Head of caudate nucleus (tissue), 42 donors: ENCODE measurements at regions of chr11 and their contacts with region 1.

Region 1: DNA sequence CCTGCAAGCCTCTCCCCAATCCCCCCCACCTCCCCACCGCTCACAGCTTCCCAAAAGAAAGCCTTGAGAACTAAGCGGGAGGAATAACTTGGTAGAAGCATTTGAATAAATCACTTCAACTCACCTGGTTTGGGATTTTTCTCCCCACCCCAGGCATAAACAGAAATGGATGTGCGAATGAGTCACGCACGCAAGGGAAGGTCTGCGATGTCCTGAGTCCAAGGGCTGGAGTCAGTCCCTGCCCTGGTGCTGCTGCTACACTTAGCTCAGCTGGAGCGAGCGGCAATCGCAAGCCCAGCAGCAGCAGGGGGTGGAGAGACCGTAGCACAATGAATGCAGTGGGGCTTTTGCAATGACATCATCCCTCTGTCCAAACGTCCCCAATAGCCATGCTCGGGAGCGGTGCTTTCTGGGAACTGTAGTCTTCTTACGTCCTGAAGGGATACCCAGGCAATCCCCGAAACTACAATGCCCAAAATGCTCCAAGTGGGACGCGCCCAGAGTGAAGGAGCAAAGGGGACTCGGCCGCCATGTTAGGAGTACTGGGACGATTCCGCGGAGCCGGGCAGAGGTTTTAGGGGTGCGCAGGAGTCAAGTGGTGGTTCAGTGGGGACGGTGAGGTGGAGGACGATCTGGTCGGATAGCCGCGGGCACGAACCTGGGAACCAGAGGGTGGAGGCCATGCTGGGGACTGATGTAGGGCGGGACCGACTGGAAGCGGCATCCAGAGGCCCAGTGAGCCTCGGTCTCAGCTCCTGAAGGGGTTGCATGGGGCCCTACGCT is at the start of gene RAB30:
- DNase-seq: peak; percentile 93 to 100 (median 99)

Region 2: DNA sequence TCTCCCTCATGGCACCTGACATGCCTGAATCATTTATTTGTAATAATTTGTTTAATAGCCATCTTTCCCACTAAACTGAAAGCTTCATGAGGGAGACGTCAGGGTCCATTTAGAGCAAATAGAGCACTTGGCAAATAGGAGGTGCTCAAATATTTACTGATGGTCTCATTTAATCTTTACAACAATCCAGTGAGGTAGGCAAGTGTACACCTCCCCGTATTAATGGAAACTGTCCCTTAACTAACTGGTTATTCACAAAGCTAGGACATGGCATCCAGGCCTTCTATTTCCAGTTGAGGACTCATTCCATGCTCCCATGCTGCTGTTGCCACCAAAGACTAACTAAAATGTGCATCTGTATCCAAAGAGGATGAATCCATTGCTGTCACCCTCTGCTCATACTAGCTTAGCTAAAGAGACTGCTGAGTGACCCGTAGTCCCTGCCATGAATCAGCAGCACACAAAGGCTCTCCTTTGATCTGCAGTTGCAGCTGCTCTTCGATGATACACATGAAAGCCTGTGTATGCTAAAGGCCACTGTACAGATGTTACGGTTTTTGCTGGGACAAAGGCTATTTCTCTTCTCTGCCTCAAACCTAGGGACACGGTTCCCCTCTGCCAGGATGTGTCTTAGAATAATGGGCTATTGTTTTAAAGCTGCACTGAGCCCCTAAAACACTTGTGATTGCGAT is 82.7 kb before region 1 on chr11:
- intact Hi-C with region 1: loop called (anchors 5 kb)
- DNase-seq: peak; percentile 22 to 92 (median 76)

Region 3: DNA sequence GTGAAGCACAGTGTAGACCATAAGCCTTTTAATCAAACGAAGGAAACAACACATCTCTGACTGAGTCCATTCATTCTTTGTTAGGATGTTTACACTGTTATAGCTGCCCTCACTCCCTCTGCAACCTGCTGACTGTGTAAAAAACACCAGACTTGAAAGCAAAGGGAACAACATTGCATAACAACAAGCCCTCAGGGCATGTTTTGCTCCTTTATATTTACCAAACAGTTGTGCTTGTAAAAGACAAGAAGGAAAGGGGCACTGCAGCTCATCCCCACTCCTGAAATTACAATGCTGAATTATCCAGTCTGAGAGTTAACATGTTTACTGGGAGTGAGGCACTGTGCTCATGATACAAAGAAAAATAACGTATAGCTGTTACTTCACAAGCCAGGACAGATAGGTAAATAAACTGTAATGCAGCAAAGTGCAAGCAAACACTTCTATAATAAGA is 46.5 kb before region 1 on chr11:
- intact Hi-C with region 1: loop called (anchors 10 kb)
- DNase-seq: peak in 11 of 42 donors; percentile 30 to 66 (median 39)

Region 4: DNA sequence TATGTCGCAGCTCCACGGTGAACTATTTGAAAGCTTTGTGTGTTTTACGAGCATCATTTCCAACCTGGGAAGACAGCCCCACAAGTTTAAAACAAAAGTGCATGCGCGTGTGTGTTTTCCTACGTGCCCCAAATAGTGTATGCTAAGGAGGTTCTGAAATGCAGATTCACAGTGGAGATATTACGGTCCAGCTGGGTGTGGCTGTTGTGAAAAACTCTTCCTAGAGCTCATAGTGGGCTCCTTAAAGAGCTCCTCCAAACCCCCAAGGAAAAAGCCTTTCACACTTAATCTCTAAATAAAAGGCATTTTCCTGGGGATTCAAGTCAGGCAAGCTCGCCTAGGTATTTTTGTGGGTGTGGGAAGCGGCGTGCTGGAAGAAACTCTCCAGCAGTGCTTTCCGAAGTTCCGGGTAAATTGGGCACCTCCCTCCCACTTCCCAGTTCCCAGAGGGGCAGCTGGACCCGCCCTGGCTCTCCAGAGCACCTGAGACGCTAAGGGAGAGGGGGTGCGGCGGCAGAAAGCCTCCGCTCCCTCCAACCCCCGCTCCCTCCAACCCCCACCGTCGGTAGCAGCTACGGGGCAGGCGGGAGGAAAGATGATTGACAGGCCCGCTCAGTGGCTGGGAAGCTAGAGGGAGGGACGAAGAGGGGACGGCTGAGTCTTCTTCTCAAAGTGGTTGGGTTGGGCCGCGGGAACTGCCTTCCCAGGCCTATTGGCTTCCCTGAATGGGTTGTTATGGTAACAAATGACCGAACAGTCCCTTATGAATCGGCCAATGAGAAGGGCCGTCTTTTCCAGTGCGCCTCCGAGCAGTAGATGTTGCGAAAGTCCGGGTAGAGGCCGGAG is 84.6 kb after region 1 on chr11:
- intact Hi-C with region 1: loop called (anchors 2 kb)
- DNase-seq: peak in 37 of 42 donors; percentile 27 to 100 (median 99)